ENCODE measurements at regions of chr6 and their contacts with region 1.

Region 1: GRCh38 chr6:56955171-56956045 is 501 bp downstream of the BEND6 start:
- DNase-seq: peak; percentile 90
- H3K4me3 ChIP-seq: peak overlapping the region; percentile 75
- H3K27ac ChIP-seq: peak overlapping the region; percentile 56
- H3K4me1 ChIP-seq: peaks cover 16% of the 10 kb centered on the region
- CTCF ChIP-seq: peak; percentile 80

Region 2: DNA sequence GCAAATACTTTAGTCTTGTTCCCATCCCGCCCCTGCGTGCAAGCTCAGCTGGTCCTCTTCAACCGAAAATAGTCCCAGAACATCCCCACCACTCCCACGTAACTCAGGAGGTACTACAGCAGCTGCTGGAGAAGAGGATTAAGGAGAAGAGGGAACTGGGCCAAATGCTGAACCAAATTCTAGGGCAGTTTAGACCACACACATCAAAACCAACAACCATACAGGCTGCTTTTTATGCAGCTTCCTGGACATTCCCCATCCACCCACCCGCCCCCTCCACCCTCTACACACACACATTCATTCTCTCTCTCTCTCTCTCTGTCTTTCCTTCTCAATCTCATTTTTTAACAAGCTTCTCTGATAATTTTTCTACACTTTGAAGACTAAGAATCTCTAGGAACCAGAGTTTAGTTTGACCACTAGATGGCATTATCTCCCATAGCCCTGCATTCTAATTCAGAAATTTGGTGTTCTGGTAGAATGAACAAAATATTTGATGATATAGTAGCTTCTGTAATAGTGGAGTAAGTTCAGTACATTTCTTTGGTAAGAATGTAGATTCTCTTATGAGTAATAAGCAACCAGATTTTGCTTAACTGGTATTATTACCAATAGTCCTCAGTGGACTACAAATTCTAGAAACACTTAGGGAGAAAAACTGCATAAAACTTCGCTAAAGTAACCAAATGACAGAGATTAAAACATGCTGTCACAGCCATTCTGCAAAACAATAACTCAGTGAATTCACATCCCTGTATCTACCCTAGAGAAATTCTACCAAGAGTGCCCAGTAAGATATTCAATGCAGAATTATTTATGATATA is 52.6 kb before region 1 on chr6:
- CTCF ChIA-PET with region 1: no interaction called
- POLR2A ChIA-PET with region 1: no interaction called
- intact Hi-C with region 1: loop called (anchors 1 kb)
- DNase-seq: peak; percentile 57
- H3K4me3 ChIP-seq: no peak overlapping the region
- H3K27ac ChIP-seq: no peak overlapping the region
- H3K4me1 ChIP-seq: no peaks in the 10 kb centered on the region
- CTCF ChIP-seq: peak; percentile 92

Region 3: GRCh38 chr6:56938649-56939191 is 16.7 kb before region 1 on chr6:
- CTCF ChIA-PET with region 1: no interaction called
- POLR2A ChIA-PET with region 1: no interaction called
- intact Hi-C with region 1: no loop called
- DNase-seq: no peak
- H3K4me3 ChIP-seq: no peak overlapping the region
- H3K27ac ChIP-seq: no peak overlapping the region
- H3K4me1 ChIP-seq: no peaks in the 10 kb centered on the region
- CTCF ChIP-seq: no peak

Region 4: GRCh38 chr6:57021086-57021720 is 65.8 kb after region 1 on chr6:
- CTCF ChIA-PET with region 1: no interaction called
- POLR2A ChIA-PET with region 1: no interaction called
- intact Hi-C with region 1: loop called (anchors 1 kb)
- DNase-seq: peak; percentile 67
- H3K4me3 ChIP-seq: no peak overlapping the region
- H3K27ac ChIP-seq: no peak overlapping the region
- H3K4me1 ChIP-seq: no peaks in the 10 kb centered on the region
- CTCF ChIP-seq: peak; percentile 81

Region 5: DNA sequence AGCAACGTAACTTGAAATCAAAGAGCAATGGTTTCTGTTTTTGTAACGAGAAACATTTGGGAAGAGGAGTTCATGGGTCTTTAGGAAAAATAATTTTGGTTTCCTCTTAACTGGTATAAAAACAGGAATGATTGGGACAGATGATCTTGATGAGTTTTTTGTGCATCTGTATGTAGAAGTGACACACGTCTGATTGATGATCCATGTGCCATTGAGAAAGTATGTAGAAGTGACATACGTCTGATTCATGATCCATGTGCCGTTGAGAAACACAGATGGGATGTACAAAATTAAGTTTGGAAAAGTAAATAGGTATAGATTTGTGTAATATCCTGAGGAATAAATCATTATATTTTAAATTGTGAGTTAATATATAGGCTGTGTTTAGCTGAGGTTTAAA is 93.2 kb after region 1 on chr6:
- CTCF ChIA-PET with region 1: no interaction called
- POLR2A ChIA-PET with region 1: interaction called, 4 read pairs
- intact Hi-C with region 1: loop called (anchors 1 kb)
- DNase-seq: no peak
- H3K4me3 ChIP-seq: peak overlapping the region; percentile 64
- H3K27ac ChIP-seq: no peak overlapping the region
- H3K4me1 ChIP-seq: peaks cover 24% of the 10 kb centered on the region
- CTCF ChIP-seq: no peak

Region 6: GRCh38 chr6:57089687-57090460 is 134.5 kb after region 1 on chr6 and contains the start of gene ZNF451:
- CTCF ChIA-PET with region 1: no interaction called
- POLR2A ChIA-PET with region 1: no interaction called
- intact Hi-C with region 1: loop called (anchors 5 kb)
- DNase-seq: peak; percentile 95
- H3K4me3 ChIP-seq: peak within 1 kb of the TSS; percentile 71
- H3K27ac ChIP-seq: peak within 1 kb of the TSS; percentile 62
- H3K4me1 ChIP-seq: peaks cover 33% of the 10 kb centered on the region
- CTCF ChIP-seq: no peak
- total RNA-seq, gene ZNF451: 35.1 and 50.0 TPM in 2 replicates

Region 7: DNA sequence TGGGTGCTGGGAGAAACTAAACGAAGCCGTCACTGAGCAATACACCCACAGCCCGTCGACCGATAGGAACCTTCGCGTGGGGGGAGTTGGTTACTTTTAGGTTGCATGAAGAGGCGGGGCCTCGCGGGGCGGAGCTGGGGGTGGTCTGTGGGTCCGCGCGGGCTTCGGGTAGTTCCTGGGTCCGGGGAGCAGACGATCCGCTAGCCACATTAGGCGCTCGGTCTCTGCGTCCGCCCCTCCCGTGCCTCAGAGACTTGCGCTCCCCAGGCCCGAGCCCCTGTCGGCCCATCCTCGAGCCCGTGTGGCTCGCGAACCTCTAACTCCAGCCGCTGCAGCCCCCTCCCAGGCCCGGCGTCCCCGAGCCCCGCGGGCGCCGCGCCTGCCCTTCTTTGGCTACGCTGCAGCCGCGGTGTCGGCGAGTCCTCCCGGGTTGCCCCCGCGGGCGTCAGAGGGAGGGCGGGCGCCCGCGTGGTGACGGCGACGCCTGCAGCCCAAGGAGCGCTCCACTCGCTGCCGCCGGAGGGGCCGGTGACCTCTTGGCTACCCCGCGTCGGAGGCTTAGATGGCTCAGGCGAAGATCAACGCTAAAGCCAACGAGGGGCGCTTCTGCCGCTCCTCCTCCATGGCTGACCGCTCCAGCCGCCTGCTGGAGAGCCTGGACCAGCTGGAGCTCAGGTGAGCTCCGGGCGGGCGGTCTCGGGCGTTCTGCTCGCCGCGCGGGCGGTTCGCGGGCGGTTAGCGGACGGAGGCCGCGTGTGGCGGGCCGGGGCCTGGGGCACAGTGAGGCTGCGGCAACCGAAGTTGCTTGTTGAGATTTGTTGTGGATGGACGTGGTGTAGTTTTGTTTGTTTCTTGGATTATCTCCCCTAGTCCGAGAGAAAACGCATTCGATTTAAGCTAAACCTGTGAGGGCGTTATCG is 217.0 kb after region 1 on chr6 and contains the start of gene BAG2:
- CTCF ChIA-PET with region 1: interaction called, 3 read pairs
- POLR2A ChIA-PET with region 1: interaction called, 3 read pairs
- intact Hi-C with region 1: loop called (anchors 1 kb)
- DNase-seq: peak; percentile 96
- H3K4me3 ChIP-seq: peak within 1 kb of the TSS; percentile 88
- H3K27ac ChIP-seq: peak within 1 kb of the TSS; percentile 82
- H3K4me1 ChIP-seq: peaks cover 20% of the 10 kb centered on the region
- CTCF ChIP-seq: 0 out of 2 replicates have a peak, but pooled peaks have one; percentile 23
- total RNA-seq, gene BAG2: 6.8 and 7.7 TPM in 2 replicates

Region 8: DNA sequence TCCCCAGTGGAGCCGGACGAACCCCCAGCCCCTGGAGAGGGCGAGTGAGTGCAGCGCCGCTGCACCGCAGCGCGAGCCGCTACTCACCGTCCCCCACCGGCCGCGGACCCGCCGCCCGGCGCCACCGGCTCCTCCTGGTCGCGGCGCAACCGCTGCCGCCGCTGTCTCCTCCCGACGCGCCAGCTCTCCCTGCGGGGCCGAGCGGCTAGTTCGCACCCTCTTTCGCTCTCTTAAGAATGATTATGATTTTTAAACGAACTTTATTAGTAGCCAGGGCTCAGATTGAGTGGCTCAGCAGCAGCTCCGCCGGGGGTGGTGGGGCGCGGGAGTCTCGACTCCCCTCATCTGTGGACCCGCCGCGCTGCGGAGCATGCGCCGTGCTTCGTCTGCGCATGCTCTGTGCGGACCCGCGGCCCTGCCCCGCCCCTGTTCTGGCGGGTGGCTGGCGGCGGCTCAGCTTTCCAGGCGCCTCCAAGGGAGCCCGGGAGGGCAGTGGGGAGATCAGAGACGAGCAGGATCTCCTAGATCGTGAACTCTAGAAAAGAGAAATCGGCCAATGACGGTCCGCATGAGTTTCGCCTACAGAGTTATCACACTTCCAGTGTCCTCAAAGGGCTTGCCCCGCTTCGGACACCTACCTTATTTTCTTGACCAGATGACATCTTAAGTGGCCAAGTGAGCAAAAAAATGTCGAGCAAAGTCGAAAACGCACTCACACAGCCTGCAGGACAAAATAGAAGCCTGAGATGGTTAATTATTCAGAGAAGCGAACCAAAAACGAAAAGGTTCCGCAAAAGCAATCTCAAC is 266.7 kb after region 1 on chr6 and contains the start of gene RAB23:
- CTCF ChIA-PET with region 1: no interaction called
- POLR2A ChIA-PET with region 1: no interaction called
- intact Hi-C with region 1: loop called (anchors 1 kb)
- DNase-seq: peak; percentile 85
- H3K4me3 ChIP-seq: peak within 1 kb of the TSS; percentile 87
- H3K27ac ChIP-seq: peak within 1 kb of the TSS; percentile 53
- H3K4me1 ChIP-seq: peaks cover 15% of the 10 kb centered on the region
- CTCF ChIP-seq: 0 out of 2 replicates have a peak, but pooled peaks have one; percentile 6
- total RNA-seq, gene RAB23: 3.5 and 4.9 TPM in 2 replicates